ENCODE measurements at regions of chr10 and their contacts with region 1.

Region 1: GRCh38 chr10:88565072-88565471 is 18.0 kb downstream of the RNLS start:
- DNase-seq: peak in 2 of 3 donors; percentile 7 to 27
- H3K4me3 ChIP-seq: no peak overlapping the region
- H3K4me3 Mint-ChIP-seq: no peak overlapping the region
- H3K27ac ChIP-seq: no peak overlapping the region
- H3K27ac Mint-ChIP-seq: no peak overlapping the region
- H3K4me1 ChIP-seq: no peaks in the 10 kb centered on the region
- H3K4me1 Mint-ChIP-seq: no peaks in the 10 kb centered on the region
- H3K27me3 ChIP-seq: no peaks in the 10 kb centered on the region
- H3K27me3 Mint-ChIP-seq: no peaks in the 10 kb centered on the region
- CTCF ChIP-seq: peak; percentile 71

Region 2: GRCh38 chr10:88800152-88801125 is 235.4 kb after region 1 on chr10:
- intact Hi-C with region 1: loop called in 1 of 2 experiments (anchors 10 kb)
- DNase-seq: no peak
- H3K4me3 ChIP-seq: no peak overlapping the region
- H3K4me3 Mint-ChIP-seq: no peak overlapping the region
- H3K27ac ChIP-seq: no peak overlapping the region
- H3K27ac Mint-ChIP-seq: peak overlapping the region in 1 of 7 donors; percentile 38
- H3K4me1 ChIP-seq: no peaks in the 10 kb centered on the region
- H3K4me1 Mint-ChIP-seq: no peaks in the 10 kb centered on the region
- H3K27me3 ChIP-seq: peaks cover 12 to 15% of the 10 kb centered on the region in 2 donors
- H3K27me3 Mint-ChIP-seq: peaks cover 11 to 29% (median 18%) of the 10 kb centered on the region in 3 donors
- CTCF ChIP-seq: no peak

Measured in CD14-positive monocyte (primary cell).